ENCODE measurements at regions of chr15 and their contacts with region 1.

Region 1: GRCh38 chr15:50876989-50877360 is 31.5 kb upstream of the AP4E1 start:
- DNase-seq: peak; percentile 58
- ATAC-seq: peak; percentile 79 to 80

Region 2: DNA sequence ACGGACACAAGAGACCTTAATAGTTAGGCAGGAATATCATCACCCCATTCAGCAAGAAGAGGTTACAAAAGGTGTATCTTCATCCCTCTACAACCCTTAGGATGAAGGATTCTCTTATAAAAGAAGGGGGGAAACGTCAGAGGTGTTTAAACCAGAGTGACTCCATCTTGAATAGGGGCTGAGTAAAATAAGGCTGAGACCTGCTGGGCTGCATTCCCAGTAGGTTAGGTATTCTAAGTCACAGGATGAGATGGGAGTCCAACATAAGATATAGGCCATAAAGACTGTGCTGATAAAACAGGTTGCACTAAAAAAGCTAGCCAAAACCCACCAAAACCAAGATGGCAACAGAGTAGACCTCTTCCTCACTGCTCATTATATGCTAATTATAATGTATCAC is 206.9 kb before region 1 on chr15:
- intact Hi-C with region 1: loop called (anchors 2 to 5 kb)
- DNase-seq: no peak
- ATAC-seq: no peak

Region 3: GRCh38 chr15:50675536-50676144 is 201.3 kb before region 1 on chr15:
- intact Hi-C with region 1: loop called (anchors 2 to 5 kb)
- DNase-seq: no peak
- ATAC-seq: no peak

Region 4: GRCh38 chr15:50765195-50765973 is 111.6 kb before region 1 on chr15 and contains the start of gene SPPL2A:
- intact Hi-C with region 1: loop called in 1 of 2 experiments (anchors 5 kb)
- DNase-seq: peak; percentile 89
- ATAC-seq: peak; percentile 93 to 97
- total RNA-seq, gene SPPL2A: 95.1 to 129 TPM

Region 5: GRCh38 chr15:50908210-50909009 is 31.4 kb after region 1 on chr15 and contains the start of gene AP4E1:
- intact Hi-C with region 1: no loop called
- DNase-seq: peak; percentile 90
- ATAC-seq: peak; percentile 86
- total RNA-seq, gene AP4E1: 6.3 to 9.9 TPM

Measured in left cardiac atrium (tissue), 4 donors.